CD14-positive monocyte (primary cell): ENCODE measurements at regions of chr18 and their contacts with region 1.

Region 1: DNA sequence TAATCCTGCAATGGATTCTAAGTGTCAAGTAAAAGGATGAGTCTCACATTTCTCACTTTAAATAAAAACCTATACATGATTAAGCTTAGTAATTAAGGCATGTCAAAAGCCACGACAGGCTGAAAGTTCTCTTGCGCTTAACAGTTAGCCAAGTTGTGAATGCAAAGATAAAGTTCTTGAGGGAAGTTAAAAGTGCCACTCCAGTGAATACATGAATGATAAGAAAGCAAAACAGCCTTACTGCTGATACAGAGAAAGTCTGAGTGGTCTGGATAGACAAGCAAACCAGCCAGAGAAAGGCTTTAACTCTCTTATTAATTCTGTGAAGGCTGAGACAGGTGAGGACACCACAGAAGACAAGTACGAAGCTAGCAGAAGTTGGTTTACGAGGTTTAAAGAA is 12.7 kb downstream of the THOC1 start:
- DNase-seq: no peak
- H3K4me3 ChIP-seq: no peak overlapping the region
- H3K4me3 Mint-ChIP-seq: no peak overlapping the region
- H3K27ac ChIP-seq: no peak overlapping the region
- H3K27ac Mint-ChIP-seq: no peak overlapping the region
- H3K4me1 ChIP-seq: peaks cover 3 to 18% of the 10 kb centered on the region in 2 donors
- H3K4me1 Mint-ChIP-seq: peaks cover 10% of the 10 kb centered on the region
- H3K27me3 ChIP-seq: no peaks in the 10 kb centered on the region
- H3K27me3 Mint-ChIP-seq: no peaks in the 10 kb centered on the region
- CTCF ChIP-seq: no peak

Region 2: GRCh38 chr18:172361-172760 is 82.8 kb before region 1 on chr18:
- intact Hi-C with region 1: loop called in 1 of 2 experiments (anchors 5 kb)
- DNase-seq: no peak
- H3K4me3 ChIP-seq: no peak overlapping the region
- H3K4me3 Mint-ChIP-seq: no peak overlapping the region
- H3K27ac ChIP-seq: no peak overlapping the region
- H3K27ac Mint-ChIP-seq: no peak overlapping the region
- H3K4me1 ChIP-seq: no peaks in the 10 kb centered on the region
- H3K4me1 Mint-ChIP-seq: no peaks in the 10 kb centered on the region
- H3K27me3 ChIP-seq: no peaks in the 10 kb centered on the region
- H3K27me3 Mint-ChIP-seq: no peaks in the 10 kb centered on the region
- CTCF ChIP-seq: no peak

Region 3: DNA sequence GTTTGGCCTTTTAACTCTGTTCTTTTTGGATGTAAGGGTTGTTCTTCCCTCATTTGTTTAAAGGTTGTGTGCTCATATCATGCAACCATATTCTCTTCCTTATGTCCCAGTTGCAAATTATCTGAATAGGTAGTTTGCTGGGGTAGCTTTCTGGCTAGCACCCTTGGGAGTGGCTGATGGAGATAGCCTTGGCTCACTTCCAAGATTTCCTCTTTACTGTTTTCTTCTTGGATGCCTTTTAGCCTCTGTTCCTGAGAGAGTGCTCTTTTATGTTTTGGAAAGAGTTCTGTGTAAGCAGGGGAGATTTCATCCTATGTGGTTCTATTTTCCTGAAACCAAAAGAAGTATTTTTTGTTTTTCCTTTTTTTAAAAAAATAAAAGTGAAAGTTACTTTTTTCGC is 71.4 kb before region 1 on chr18:
- intact Hi-C with region 1: no loop called
- DNase-seq: no peak
- H3K4me3 ChIP-seq: no peak overlapping the region
- H3K4me3 Mint-ChIP-seq: no peak overlapping the region
- H3K27ac ChIP-seq: no peak overlapping the region
- H3K27ac Mint-ChIP-seq: peak overlapping the region in 3 of 7 donors; percentile 7 to 74 (median 54)
- H3K4me1 ChIP-seq: no peaks in the 10 kb centered on the region
- H3K4me1 Mint-ChIP-seq: no peaks in the 10 kb centered on the region
- H3K27me3 ChIP-seq: no peaks in the 10 kb centered on the region
- H3K27me3 Mint-ChIP-seq: peaks cover 0 to 1% (median 0%) of the 10 kb centered on the region in 3 donors
- CTCF ChIP-seq: no peak